ENCODE measurements at regions of chr1 and their contacts with region 1.

Region 1: GRCh38 chr1:226798427-226799411 is 59.6 kb upstream of the ITPKB start:
- DNase-seq: no peak
- ATAC-seq: no peak
- H3K4me3 Mint-ChIP-seq: no peak overlapping the region
- H3K27ac Mint-ChIP-seq: no peak overlapping the region
- H3K4me1 Mint-ChIP-seq: no peaks in the 10 kb centered on the region
- H3K27me3 Mint-ChIP-seq: no peaks in the 10 kb centered on the region
- CTCF ChIP-seq: no peak

Region 2: DNA sequence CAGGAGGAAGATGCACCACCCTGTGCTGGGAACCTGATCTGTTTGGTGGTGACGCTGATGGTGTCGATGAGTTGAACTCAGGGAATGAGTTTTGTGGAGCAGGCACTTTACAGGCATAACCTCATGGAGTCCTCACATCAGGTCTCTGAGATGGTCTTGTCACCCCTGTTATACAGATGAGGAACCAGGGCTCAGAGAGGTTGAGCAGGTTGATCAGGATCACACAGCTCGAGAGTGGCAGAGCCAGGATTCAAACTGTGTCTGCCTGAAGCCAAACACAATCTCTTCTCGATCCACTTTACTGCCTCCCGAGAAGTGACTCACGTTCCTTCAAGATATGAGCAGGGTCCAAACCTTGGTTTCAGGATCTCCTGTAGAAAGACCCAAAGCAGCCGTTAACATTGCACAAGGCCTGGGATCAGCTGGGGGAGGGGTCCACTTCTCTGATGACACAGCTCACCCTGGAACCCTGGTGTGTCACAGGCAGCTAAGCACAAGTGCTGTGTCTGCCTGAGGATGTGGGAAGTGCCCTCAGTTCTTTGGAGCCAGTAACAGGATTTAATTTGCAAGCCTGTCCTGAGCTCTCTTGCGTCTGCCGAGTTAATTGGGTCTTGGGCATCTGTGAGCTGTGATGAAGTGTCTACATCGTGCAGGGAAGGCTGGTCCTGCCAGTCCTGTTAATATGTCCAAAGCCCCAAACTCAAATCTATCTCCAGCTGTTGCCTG is 315.6 kb before region 1 on chr1:
- CTCF ChIA-PET with region 1: no interaction called
- POLR2A ChIA-PET with region 1: interaction called, 13 read pairs
- DNase-seq: no peak
- ATAC-seq: no peak
- H3K4me3 Mint-ChIP-seq: no peak overlapping the region
- H3K27ac Mint-ChIP-seq: no peak overlapping the region
- H3K4me1 Mint-ChIP-seq: no peaks in the 10 kb centered on the region
- H3K27me3 Mint-ChIP-seq: no peaks in the 10 kb centered on the region
- CTCF ChIP-seq: no peak

Measured in WTC11 (cell line).